PC-9 (cell line): ENCODE measurements at regions of chr14 and their contacts with region 1.

Region 1: DNA sequence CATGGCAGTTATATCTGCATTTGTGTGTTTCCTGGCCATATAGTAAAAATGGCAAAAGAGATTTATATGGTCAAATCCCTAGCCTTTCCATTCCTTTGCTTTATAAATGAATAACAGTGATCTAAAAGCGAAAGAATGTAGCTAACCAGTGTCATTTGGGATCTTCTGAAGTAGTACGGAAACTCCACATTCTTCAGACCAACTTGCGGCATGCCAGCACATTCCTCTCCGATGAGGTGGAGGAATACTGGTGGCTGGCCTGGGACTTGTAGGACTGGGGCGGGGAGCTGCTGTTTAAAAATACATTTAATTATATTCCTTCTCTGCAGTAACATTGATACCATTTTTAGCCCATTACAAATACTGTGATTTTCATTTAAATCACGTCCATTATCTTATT is 85.3 kb downstream of the SAMD4A start:
- DNase-seq: peak; percentile 84 to 98
- H3K4me3 ChIP-seq: peak overlapping the region; percentile 42; the same call in 1 of the 2 replicates
- H3K27ac ChIP-seq: peak overlapping the region; percentile 96
- H3K4me1 ChIP-seq: peaks cover 66% of the 10 kb centered on the region
- H3K27me3 ChIP-seq: no peaks in the 10 kb centered on the region
- CTCF ChIP-seq: no peak

Region 2: DNA sequence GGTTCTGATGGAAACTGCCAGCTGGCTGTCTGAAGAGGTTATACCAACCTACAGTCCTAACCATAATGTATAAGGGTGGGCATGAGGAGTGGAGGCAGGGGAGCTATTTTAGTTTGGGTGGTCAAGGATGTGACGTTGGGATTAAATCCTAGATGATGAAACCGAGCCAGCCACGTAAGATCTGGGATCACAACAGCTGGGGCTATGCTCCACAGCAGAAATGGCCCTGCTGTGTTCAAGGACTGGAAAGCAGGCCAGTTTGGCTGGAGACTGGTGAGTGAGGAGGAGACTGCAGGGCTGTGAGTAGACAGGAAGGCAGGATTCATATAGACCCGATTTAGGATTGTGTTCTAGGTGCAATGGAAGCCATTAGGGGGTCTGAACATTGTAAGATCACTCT is 19.1 kb before region 1 on chr14:
- CTCF ChIA-PET with region 1: no interaction called
- POLR2A ChIA-PET with region 1: no interaction called
- intact Hi-C with region 1: no loop called
- DNase-seq: no peak
- H3K4me3 ChIP-seq: no peak overlapping the region
- H3K27ac ChIP-seq: no peak overlapping the region
- H3K4me1 ChIP-seq: no peaks in the 10 kb centered on the region
- H3K27me3 ChIP-seq: no peaks in the 10 kb centered on the region
- CTCF ChIP-seq: no peak

Region 3: DNA sequence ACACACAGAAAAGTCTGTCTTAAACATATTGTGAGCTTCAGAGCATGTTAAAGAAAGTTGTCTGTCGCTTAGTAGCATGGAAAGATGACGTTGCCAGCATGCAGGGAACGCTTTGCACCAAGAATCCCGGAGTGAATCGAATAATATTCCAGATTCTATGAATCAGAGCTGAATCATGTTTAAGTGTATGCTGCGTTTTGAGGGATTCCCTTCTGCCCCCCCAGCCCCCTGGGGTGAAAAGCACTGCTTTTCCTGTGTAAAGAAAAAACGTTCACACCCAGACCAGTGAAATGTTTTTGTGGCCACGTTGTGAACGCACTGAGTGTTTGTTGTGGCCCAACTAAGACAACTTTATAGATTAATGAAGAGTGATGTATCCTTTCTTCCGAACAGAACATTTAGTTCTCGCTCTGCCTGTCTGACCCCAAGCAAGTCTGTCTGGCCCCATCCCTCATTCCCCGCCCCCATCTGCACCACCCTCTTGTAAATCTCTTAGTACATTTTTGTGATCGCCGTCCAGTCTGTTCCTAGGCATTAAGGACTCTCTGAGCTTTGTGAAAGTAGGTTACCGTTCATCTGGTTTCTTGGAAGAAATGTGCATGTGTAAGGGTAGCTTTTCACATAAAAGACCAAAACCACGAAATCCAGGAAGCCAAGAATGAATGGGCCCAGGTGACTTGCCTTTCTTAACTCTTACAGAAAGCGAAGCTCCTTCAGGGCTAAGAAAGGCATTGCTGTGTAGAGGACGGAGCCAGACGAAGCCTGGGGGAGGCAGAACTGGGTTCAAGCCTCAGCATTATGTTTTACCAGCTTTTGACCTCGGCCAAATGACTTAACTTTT is 17.8 kb after region 1 on chr14:
- CTCF ChIA-PET with region 1: no interaction called
- POLR2A ChIA-PET with region 1: interaction called, 4 read pairs
- intact Hi-C with region 1: loop called (anchors 1 kb)
- DNase-seq: no peak
- H3K4me3 ChIP-seq: no peak overlapping the region
- H3K27ac ChIP-seq: no peak overlapping the region
- H3K4me1 ChIP-seq: no peaks in the 10 kb centered on the region; the same call in 1 of the 2 replicates
- H3K27me3 ChIP-seq: no peaks in the 10 kb centered on the region
- CTCF ChIP-seq: no peak

Region 4: DNA sequence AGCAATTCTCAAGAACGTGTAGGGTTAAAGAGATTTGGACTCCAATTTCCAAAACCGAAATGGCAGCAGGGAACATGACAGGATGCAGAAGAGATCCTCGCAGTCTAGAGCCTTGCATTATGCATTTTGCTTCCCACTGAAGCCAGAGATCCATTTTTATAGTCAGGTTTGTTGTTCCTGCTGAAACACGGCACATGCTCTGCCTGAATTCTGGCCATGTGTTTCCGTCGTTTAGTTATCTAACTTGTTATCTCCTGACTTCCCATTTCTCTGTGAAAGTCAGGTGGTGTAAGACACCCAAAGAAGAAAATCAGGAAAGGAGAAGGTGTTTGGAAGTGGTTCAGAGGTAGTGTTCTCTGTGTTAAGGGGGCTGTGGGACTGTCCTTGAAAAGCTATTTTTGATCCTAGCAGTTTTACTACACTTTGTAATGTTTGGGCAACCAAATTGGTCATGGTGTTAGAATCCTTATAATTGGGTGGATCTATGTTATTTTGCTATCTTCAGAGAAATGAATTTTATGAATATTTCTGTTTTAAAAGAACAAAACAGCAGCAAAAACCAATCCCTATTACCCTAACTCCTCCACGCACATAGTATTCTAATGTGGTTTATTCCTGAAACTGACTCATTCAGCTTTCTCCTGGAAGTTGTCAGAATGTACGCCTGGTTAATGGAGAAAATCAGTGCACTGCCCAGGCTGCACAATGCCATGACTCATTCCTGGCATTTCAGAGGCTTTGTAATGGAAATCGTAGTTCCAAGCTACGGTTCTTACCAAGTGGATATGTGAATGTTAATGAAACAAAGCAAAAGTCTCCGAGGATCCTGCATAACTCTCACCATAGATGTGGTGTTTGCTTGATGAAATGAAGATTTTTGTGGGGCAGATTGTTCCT is 24.9 kb after region 1 on chr14:
- CTCF ChIA-PET with region 1: no interaction called
- POLR2A ChIA-PET with region 1: interaction called, 14 read pairs
- intact Hi-C with region 1: no loop called
- DNase-seq: peak; percentile 50 to 87
- H3K4me3 ChIP-seq: no peak overlapping the region
- H3K27ac ChIP-seq: peak overlapping the region; percentile 64
- H3K4me1 ChIP-seq: peaks cover 17% of the 10 kb centered on the region
- H3K27me3 ChIP-seq: no peaks in the 10 kb centered on the region
- CTCF ChIP-seq: no peak

Region 5: GRCh38 chr14:54691525-54692283 is 39.5 kb after region 1 on chr14:
- CTCF ChIA-PET with region 1: interaction called, 7 read pairs
- POLR2A ChIA-PET with region 1: no interaction called
- intact Hi-C with region 1: loop called (anchors 2 kb)
- DNase-seq: peak; percentile 49 to 73
- H3K4me3 ChIP-seq: no peak overlapping the region
- H3K27ac ChIP-seq: no peak overlapping the region
- H3K4me1 ChIP-seq: peaks cover 4% of the 10 kb centered on the region
- H3K27me3 ChIP-seq: no peaks in the 10 kb centered on the region
- CTCF ChIP-seq: peak; percentile 87

Region 6: DNA sequence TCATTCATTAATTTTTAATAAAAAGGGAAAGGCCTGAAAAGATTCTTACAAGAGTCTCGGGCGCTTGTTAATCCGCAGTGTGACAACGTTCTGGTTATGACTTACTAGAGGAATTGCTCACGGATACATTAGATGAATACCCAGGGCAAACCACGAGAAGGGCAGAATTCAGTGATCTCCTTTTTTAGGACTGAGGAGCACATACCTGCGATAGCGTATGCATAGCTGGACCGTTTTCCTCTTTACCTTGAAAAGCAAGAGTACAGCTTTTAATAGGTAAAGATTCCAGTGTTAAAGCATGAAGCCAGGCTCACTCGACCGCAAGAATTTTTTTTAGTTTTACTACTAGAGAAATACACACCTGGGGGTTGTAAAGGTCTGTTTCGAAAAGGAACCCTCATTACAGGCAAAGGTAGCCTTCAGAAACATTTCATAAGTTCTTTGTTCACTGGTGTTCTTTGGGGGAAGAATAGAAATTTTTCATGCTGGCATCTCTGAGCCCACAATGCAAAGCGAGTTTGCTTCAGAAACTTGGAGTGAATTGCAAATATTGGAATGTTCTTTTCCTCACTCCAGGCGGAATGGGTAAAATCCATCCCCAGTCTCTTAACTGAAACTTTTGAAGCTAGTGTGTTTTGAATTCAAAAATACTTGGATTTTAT is 400.2 kb after region 1 on chr14:
- CTCF ChIA-PET with region 1: no interaction called
- POLR2A ChIA-PET with region 1: no interaction called
- intact Hi-C with region 1: no loop called
- DNase-seq: no peak
- H3K4me3 ChIP-seq: peak overlapping the region; percentile 80
- H3K27ac ChIP-seq: peak overlapping the region; percentile 88
- H3K4me1 ChIP-seq: peaks cover 17% of the 10 kb centered on the region
- H3K27me3 ChIP-seq: no peaks in the 10 kb centered on the region
- CTCF ChIP-seq: no peak